ENCODE measurements at regions of chr3 and their contacts with region 1.

Region 1: DNA sequence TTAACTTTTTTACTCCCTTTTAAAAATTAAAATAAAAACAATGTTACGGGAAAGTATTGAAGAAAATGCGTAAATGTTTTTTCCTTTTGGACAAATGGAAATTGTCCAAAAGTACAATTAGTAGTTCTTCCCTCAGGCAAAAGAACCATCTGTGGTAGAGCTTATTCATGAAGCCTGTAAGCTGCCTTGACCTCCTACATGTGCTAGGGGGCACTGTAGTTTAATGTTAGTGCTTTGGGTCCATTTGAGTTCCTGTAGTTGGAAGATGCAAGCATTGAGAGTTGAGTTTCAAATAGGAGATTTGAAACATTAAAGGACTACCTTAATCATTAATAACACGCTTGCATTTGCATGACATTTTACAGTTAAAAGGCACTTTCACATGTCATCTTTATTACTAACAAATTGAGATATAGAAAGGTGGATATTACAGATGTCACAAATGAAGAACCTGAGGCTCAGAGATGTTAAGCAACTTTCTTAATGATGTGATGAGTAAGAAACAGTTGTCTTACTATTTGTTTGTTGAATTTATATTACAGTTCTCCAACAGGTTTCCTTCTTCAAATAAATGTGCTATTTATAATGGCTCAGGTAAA is 1.8 kb upstream of the ZNF385D start:
- DNase-seq: peak in 1 of 2 donors; percentile 54
- ATAC-seq: peak in 7 of 8 donors; percentile 48 to 78 (median 69)
- H3K4me3 ChIP-seq: no peak overlapping the region
- H3K27ac ChIP-seq: peak overlapping the region in 3 of 10 donors; percentile 4 to 80 (median 36)
- H3K4me1 ChIP-seq: peaks cover 0 to 47% (median 11%) of the 10 kb centered on the region in 9 donors
- H3K27me3 ChIP-seq: no peaks in the 10 kb centered on the region
- CTCF ChIP-seq: peak; percentile 58 to 89 (median 77)

Region 2: DNA sequence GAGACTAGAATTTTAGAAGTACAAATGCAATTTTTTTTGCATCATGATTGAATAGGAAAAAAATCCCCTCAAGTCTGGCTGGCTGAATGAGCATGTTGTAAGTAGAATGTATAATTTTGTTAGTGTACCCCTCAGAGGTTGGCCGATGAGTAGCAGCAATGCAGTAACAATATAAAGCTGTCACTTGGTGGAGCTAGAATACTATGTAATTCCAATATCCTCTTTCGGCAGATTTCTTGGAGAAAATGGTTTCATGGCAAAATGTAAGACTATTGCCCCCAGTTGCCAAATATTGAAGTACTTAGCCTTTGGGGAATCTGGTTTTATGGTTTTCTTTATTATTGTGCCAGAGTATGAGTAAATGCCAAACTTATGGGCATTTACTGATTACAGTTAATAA is 1527.1 kb before region 1 on chr3:
- intact Hi-C with region 1: loop called in 1 of 10 experiments (anchors 10 kb)
- DNase-seq: no peak
- ATAC-seq: peak in 3 of 8 donors; percentile 42 to 55 (median 44)
- H3K4me3 ChIP-seq: no peak overlapping the region
- H3K27ac ChIP-seq: no peak overlapping the region
- H3K4me1 ChIP-seq: peaks cover 0 to 6% (median 0%) of the 10 kb centered on the region in 9 donors
- H3K27me3 ChIP-seq: no peaks in the 10 kb centered on the region
- CTCF ChIP-seq: peak; percentile 11 to 74 (median 64)

Region 3: GRCh38 chr3:21682206-21682605 is 70.6 kb before region 1 on chr3:
- intact Hi-C with region 1: no loop called
- DNase-seq: no peak
- ATAC-seq: no peak
- H3K4me3 ChIP-seq: no peak overlapping the region
- H3K27ac ChIP-seq: peak overlapping the region in 2 of 10 donors; percentile 2 to 22
- H3K4me1 ChIP-seq: peaks cover 0 to 49% (median 12%) of the 10 kb centered on the region in 9 donors
- H3K27me3 ChIP-seq: no peaks in the 10 kb centered on the region
- CTCF ChIP-seq: no peak

Region 4: DNA sequence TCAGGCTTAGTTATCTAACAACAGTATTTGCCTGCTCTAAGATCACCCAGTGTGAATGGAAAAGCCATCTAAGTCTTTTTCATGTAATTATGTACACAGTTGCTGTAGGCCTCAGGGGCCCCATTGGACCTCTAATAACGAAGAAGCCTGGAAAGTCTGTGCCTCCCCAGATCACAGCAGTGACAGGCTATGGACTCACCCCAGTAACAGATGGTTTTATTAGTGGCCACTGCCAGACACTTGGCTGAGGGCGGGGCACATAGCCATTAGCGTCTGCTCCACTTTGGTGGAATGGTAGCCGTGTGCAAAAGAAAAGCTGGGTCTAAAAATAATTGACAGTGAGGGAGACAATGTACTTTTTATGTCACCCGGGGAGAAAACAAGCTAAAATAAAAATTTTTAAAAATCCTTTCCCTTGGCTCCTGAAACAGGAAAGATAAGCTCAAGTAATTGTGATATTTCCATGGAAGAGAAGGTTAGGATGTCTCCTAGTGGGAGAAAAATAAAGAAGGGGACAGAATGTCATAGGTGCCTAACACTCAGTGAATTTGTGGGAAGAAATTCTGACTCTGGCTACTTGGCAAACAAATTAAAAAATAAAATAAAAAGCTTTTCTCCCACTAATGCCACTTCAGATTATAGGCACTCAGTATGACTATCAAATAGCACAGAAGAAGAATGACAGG is 42.4 kb after region 1 on chr3:
- intact Hi-C with region 1: loop called in 3 of 10 experiments (anchors 5 kb)
- DNase-seq: peak; percentile 70 to 90
- ATAC-seq: peak; percentile 95 to 99 (median 98)
- H3K4me3 ChIP-seq: no peak overlapping the region
- H3K27ac ChIP-seq: peak overlapping the region in 9 of 10 donors; percentile 37 to 85 (median 78)
- H3K4me1 ChIP-seq: peaks cover 0 to 63% (median 34%) of the 10 kb centered on the region in 9 donors
- H3K27me3 ChIP-seq: no peaks in the 10 kb centered on the region
- CTCF ChIP-seq: peak in 4 of 9 donors; percentile 16 to 42 (median 30)

Region 5: GRCh38 chr3:21839592-21839991 is 86.7 kb after region 1 on chr3:
- intact Hi-C with region 1: loop called in 5 of 10 experiments (anchors 2 to 10 kb)
- DNase-seq: peak in 1 of 2 donors; percentile 81
- ATAC-seq: peak; percentile 93 to 97 (median 95)
- H3K4me3 ChIP-seq: no peak overlapping the region
- H3K27ac ChIP-seq: peak overlapping the region in 8 of 10 donors; percentile 1 to 79 (median 54)
- H3K4me1 ChIP-seq: peaks cover 0 to 16% (median 6%) of the 10 kb centered on the region in 9 donors
- H3K27me3 ChIP-seq: no peaks in the 10 kb centered on the region
- CTCF ChIP-seq: peak; percentile 44 to 75 (median 60)

Region 6: DNA sequence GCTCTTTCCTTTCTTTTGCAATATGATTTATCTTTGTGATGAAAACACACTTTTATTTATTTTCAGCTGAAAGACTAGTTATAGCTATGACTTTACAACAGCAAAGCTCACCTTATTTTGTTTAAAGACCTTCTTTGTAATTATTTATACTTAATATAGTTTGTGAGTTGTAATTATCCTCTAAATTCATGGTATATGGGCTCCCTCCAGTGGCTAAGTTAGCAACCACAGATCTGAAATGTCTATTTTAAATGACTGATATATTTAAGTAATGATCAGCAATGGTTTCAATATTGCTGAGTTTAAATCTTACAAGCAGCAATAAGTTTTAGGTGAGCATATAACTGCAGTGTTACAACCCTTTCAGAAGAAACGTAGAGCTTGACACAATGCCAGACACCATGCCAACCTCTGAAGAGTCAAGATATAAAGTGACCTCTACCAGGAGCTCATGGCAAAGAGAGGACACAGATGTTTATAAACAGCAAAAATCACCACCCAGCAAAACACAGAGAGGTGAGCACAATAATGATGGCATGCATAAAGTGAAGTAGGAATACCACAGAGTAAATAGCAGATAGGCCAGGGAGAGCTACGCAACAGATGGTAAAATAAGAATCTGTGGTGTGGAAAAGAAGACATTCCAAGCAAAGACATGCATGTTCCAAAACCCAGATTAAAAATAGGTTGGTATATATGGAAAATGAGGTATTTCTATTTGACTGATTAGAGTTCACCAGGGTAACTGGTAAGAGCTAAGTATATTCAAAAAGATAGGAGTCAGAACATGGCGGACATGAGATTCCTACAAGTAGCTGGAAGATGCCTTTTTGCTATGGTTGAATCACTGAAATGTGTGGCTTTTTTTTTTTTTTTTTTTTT is 141.9 kb after region 1 on chr3:
- intact Hi-C with region 1: loop called (anchors 1 to 5 kb)
- DNase-seq: peak in 1 of 2 donors; percentile 19
- ATAC-seq: peak in 7 of 8 donors; percentile 50 to 82 (median 71)
- H3K4me3 ChIP-seq: no peak overlapping the region
- H3K27ac ChIP-seq: peak overlapping the region in 4 of 10 donors; percentile 5 to 44 (median 33)
- H3K4me1 ChIP-seq: peaks cover 0 to 51% (median 0%) of the 10 kb centered on the region in 9 donors
- H3K27me3 ChIP-seq: no peaks in the 10 kb centered on the region
- CTCF ChIP-seq: peak; percentile 41 to 84 (median 70)

Region 7: GRCh38 chr3:22117751-22118346 is 365.0 kb after region 1 on chr3:
- intact Hi-C with region 1: loop called in 5 of 10 experiments (anchors 5 to 10 kb)
- DNase-seq: no peak
- ATAC-seq: no peak
- H3K4me3 ChIP-seq: no peak overlapping the region
- H3K27ac ChIP-seq: no peak overlapping the region
- H3K4me1 ChIP-seq: no peaks in the 10 kb centered on the region
- H3K27me3 ChIP-seq: no peaks in the 10 kb centered on the region
- CTCF ChIP-seq: peak; percentile 34 to 80 (median 66)

Measured in heart right ventricle (tissue), 16 donors.